ENCODE measurements at regions of chr4 and their contacts with region 1.

Region 1: GRCh38 chr4:121192480-121192879 is 28.4 kb upstream of the TNIP3 start:
- DNase-seq: no peak
- CTCF ChIP-seq: peak; percentile 72

Region 2: GRCh38 chr4:121252224-121252806 is 59.8 kb after region 1 on chr4:
- in situ Hi-C with region 1: loop called (anchors 10 kb)
- DNase-seq: peak; percentile 59
- CTCF ChIP-seq: peak; percentile 64

Region 3: GRCh38 chr4:121307445-121308327 is 115.2 kb after region 1 on chr4:
- in situ Hi-C with region 1: loop called (anchors 5 kb)
- DNase-seq: peak; percentile 53
- CTCF ChIP-seq: peak; percentile 78

Region 4: GRCh38 chr4:121411151-121411744 is 218.8 kb after region 1 on chr4:
- in situ Hi-C with region 1: no loop called
- DNase-seq: no peak
- CTCF ChIP-seq: no peak